ENCODE measurements at regions of chr9 and their contacts with region 1.

Region 1: GRCh38 chr9:20930836-20931235 is 100.6 kb downstream of the HACD4 start:
- DNase-seq: no peak
- ATAC-seq: no peak
- H3K4me3 ChIP-seq: no peak overlapping the region
- H3K27ac ChIP-seq: no peak overlapping the region
- H3K4me1 ChIP-seq: no peaks in the 10 kb centered on the region
- H3K27me3 ChIP-seq: no peaks in the 10 kb centered on the region
- CTCF ChIP-seq: no peak

Region 2: DNA sequence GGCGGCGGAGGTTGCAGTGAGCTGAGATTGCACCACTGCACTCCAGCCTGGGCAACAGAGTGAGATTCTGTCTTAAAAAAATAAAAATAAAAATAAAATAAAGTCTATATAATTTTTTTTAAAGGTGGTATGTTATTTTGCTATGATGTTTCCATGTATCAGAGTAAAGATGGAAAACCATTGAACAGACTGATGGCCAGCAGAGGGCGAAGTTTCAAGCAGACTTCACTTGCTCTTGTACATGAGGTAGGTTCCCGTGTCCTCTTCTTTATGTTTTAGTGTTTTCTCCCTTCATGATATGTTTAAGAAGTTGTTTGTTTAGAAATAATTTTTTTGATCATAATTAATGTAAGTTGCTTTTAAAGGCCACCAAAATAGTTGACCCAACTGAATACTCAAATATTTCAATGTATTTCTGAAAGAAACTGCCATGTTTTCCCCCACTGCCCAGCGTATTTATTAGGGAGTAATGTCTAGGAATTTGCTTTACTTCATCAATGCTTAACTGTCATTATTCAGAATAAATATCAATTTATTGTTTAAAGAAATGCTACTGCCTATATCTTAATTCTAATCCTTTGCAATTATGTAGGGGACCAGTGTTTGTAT is 45.7 kb before region 1 on chr9:
- CTCF ChIA-PET with region 1: no interaction called
- POLR2A ChIA-PET with region 1: no interaction called
- intact Hi-C with region 1: loop called (anchors 10 kb)
- DNase-seq: peak; percentile 54
- ATAC-seq: peak; percentile 64
- H3K4me3 ChIP-seq: no peak overlapping the region
- H3K27ac ChIP-seq: no peak overlapping the region
- H3K4me1 ChIP-seq: no peaks in the 10 kb centered on the region
- H3K27me3 ChIP-seq: no peaks in the 10 kb centered on the region
- CTCF ChIP-seq: peak; percentile 57

Region 3: DNA sequence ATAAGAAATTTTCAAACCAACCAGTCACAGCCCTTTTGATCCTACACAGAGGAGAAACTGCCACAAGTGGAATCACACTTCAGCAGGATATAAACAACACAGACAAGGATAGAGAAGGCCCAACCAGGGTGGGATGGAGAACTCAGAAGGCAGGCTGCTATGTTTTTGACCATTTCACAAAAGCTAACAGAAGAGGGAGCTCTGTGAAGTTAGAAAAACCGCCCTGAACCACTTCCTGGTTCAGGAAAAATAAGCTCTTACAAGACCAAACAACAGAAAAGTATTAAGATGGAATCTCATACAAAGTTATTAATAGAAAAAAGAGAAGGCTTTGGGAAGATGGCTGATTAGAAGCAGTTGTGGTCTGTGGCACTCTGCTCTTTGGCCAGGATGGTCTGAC is 147.9 kb after region 1 on chr9:
- CTCF ChIA-PET with region 1: no interaction called
- POLR2A ChIA-PET with region 1: no interaction called
- intact Hi-C with region 1: no loop called
- DNase-seq: peak; percentile 33
- ATAC-seq: no peak
- H3K4me3 ChIP-seq: no peak overlapping the region
- H3K27ac ChIP-seq: no peak overlapping the region
- H3K4me1 ChIP-seq: no peaks in the 10 kb centered on the region
- H3K27me3 ChIP-seq: no peaks in the 10 kb centered on the region
- CTCF ChIP-seq: peak; percentile 45